ENCODE measurements at regions of chr2 and their contacts with region 1.

Region 1: DNA sequence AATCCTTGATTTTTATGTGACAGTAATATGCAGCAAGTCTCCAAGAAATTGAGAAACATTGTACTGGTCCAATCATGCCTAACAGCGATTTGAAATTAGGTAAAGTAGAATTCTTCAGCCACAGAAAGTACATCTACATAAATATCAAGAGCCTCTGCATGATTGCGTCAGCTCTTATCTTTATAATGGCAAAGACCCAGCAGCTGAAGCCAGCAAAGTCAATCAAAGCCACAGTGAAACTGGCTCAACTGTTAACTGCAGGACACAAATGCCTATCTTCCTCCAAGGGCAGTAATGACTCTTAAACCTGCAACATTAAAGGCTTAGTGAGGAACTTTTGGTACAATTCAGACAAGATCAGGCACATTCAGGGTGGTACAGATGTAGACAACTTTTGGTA is 102.5 kb downstream of the BARD1 start:
- DNase-seq: no peak
- ATAC-seq: no peak
- H3K4me3 ChIP-seq: no peak overlapping the region
- H3K4me3 Mint-ChIP-seq: no peak overlapping the region
- H3K27ac ChIP-seq: no peak overlapping the region
- H3K27ac Mint-ChIP-seq: no peak overlapping the region
- H3K4me1 ChIP-seq: no peaks in the 10 kb centered on the region
- H3K4me1 Mint-ChIP-seq: peaks cover 2% of the 10 kb centered on the region
- H3K27me3 ChIP-seq: no peaks in the 10 kb centered on the region
- H3K27me3 Mint-ChIP-seq: no peaks in the 10 kb centered on the region
- CTCF ChIP-seq: no peak

Region 2: DNA sequence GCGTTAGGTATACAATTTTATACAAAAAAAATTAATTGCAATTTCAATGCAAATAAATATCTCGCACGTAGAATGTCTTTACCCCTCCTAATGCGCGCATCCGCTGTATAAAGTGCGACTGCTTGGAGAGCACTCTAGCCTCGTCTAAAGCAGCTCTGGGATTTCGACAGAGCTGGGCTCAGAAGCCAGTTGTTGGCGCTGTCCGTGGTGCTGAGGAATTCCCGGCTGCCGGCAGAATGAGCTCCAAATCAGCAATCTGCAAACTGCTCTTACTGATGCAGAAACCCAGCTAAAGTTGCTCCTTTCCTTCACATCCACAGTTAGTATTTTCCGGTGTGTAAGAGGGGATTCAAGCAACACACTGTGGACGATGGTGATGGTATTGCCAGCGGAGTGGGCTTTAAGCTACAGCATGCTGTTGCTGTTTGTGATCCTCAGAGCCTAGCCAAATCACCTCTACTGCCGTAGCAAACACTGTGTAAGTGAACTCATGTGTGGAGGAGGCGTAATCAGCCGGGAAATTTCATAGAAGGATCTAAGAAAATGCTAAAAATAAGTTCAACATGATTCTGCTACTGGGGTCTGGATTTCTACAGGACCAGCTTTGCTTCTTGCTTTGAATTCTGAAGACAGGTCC is 295.9 kb before region 1 on chr2 and contains the start of gene VWC2L:
- CTCF ChIA-PET with region 1: no interaction called
- POLR2A ChIA-PET with region 1: no interaction called
- intact Hi-C with region 1: loop called in 1 of 2 experiments (anchors 5 kb)
- DNase-seq: peak in 3 of 9 experiments; percentile 13 to 18 (median 16)
- ATAC-seq: no peak
- H3K4me3 ChIP-seq: no peak within 1 kb of the TSS
- H3K4me3 Mint-ChIP-seq: no peak within 1 kb of the TSS
- H3K27ac ChIP-seq: no peak within 1 kb of the TSS
- H3K27ac Mint-ChIP-seq: no peak within 1 kb of the TSS
- H3K4me1 ChIP-seq: no peaks in the 10 kb centered on the region
- H3K4me1 Mint-ChIP-seq: no peaks in the 10 kb centered on the region
- H3K27me3 ChIP-seq: no peaks in the 10 kb centered on the region
- H3K27me3 Mint-ChIP-seq: no peaks in the 10 kb centered on the region
- CTCF ChIP-seq: no peak
- total RNA-seq, gene VWC2L: not detected